Heart right ventricle (tissue), 16 donors: ENCODE measurements at regions of chr4 and their contacts with region 1.

Region 1: DNA sequence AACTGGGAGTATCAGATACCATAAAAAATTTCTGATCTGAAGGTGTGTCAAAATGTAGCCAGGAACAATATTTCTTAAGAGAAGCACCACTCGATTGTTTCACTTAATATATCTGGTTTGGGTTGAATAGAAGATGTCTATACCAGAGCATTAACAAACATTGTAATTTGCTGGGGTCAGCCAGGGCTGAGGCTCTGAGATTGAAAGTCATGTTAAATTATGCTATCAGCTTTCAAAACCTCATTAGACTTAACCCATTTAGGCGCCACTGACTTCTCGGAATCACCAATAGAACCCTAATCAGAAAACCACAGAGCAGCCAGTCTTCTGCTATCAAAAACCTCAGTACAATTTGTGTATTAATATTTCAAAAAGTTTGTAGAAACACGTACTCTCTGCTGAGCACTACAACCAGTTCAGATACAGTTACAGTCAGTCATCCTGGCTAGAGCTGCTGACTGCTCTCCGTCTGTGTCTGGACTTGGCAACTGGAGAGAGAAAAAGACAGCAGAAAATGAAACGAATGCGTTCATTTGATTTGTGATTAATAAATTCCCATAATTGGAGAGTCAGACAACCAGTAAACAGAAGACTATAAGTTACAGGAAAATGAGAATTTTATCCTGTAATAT is 848.6 kb upstream of the PABPC4L start:
- DNase-seq: no peak
- ATAC-seq: no peak
- H3K4me3 ChIP-seq: no peak overlapping the region
- H3K27ac ChIP-seq: no peak overlapping the region
- H3K4me1 ChIP-seq: no peaks in the 10 kb centered on the region
- H3K27me3 ChIP-seq: no peaks in the 10 kb centered on the region
- CTCF ChIP-seq: no peak

Region 2: GRCh38 chr4:135065366-135065765 is 15.2 kb after region 1 on chr4:
- intact Hi-C with region 1: loop called in 1 of 10 experiments (anchors 1 kb)
- DNase-seq: no peak
- ATAC-seq: no peak
- H3K4me3 ChIP-seq: no peak overlapping the region
- H3K27ac ChIP-seq: no peak overlapping the region
- H3K4me1 ChIP-seq: no peaks in the 10 kb centered on the region
- H3K27me3 ChIP-seq: no peaks in the 10 kb centered on the region
- CTCF ChIP-seq: no peak

Region 3: GRCh38 chr4:135732448-135732847 is 682.2 kb after region 1 on chr4:
- intact Hi-C with region 1: loop called in 1 of 10 experiments (anchors 5 kb)
- DNase-seq: no peak
- ATAC-seq: no peak
- H3K4me3 ChIP-seq: no peak overlapping the region
- H3K27ac ChIP-seq: no peak overlapping the region
- H3K4me1 ChIP-seq: no peaks in the 10 kb centered on the region
- H3K27me3 ChIP-seq: no peaks in the 10 kb centered on the region
- CTCF ChIP-seq: no peak